Activated naive CD4-positive, alpha-beta T cell treated with anti-CD3 and anti-CD28 coated beads, Interleukin-2, amount 10 ng/mL, durations not matched to agents 7 days and 5 days (primary cell): ENCODE measurements at regions of chr5 and their contacts with region 1.

Region 1: DNA sequence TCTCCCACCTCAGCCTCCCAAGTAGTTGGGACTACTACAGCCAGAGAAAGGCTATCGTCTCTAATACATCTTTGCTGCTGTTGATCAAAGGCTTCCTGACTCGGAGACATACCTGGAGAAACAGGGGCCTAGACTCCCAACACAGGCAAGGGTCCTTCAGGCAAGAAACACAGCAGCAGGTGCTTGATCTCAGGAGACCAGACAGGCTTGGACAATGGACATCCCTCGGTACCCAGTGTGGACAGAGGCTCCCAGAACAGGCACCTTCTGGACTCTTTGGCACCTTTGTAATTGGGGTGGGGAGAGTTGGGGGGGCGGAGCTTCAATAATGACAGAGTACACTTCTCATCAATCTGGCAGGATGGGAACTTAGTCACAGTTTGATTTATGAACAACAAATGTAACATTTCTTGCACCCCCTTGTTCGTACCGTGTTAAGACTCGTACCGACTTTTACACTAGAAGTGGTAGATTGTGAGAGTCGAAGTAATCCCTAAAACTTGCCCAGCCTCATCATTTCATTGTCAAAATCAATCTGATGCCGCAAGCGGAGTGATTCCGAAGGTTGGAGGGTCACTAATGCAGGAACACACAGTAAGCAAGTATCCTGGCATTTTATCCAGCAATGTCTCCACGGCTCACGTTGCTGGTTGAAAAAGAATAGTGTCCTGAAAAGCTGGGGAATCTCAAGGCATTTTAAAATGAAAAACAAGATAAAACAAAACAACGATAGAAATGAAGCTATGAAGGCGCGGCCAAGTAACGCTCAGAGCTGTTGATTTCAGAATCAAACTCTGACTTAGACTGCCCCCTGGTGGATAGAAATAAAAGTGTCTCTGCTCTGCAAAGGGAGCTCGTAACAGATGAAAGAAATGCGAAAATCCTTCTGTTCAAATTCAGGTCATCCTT is 46.4 kb upstream of the STK32A start:
- DNase-seq: peak; percentile 59
- H3K4me3 Mint-ChIP-seq: no peak overlapping the region
- H3K27ac Mint-ChIP-seq: no peak overlapping the region
- H3K4me1 Mint-ChIP-seq: peaks cover 2% of the 10 kb centered on the region
- H3K27me3 Mint-ChIP-seq: no peaks in the 10 kb centered on the region

Region 2: DNA sequence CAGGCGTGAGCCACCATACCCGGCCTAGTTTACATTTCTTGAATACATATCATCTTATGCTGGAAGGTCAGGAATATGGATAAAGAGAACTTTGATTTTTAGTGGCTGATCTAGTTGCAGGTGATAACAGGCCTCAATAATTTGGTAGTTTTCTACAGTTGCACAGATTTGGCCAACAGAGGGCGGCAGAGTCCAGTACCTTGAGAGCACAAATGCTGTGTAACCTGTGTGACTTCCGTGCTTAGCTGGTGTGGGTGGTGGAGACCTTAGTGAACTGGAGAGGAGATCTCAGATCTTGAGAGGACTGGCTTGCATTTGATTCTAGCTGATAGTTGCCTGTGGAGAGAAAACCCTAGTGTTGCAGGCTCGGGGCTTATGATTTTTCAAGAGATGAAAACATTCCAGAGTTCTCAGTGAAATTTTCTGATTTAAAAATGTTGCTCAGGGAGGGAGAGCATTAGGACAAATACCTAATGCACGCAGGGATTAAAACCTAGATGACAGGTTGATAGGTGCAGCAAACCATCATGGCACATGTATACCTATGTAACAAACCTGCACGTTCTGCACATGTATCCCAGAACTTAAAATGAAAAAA is 655.1 kb before region 1 on chr5:
- CTCF ChIA-PET with region 1: interaction called, 38 read pairs
- DNase-seq: peak; percentile 85
- H3K4me3 Mint-ChIP-seq: no peak overlapping the region
- H3K27ac Mint-ChIP-seq: no peak overlapping the region
- H3K4me1 Mint-ChIP-seq: peaks cover 12% of the 10 kb centered on the region
- H3K27me3 Mint-ChIP-seq: peaks cover 9% of the 10 kb centered on the region

Region 3: GRCh38 chr5:146541958-146542849 is 646.2 kb before region 1 on chr5:
- CTCF ChIA-PET with region 1: interaction called, 38 read pairs
- DNase-seq: peak; percentile 75
- H3K4me3 Mint-ChIP-seq: no peak overlapping the region
- H3K27ac Mint-ChIP-seq: no peak overlapping the region
- H3K4me1 Mint-ChIP-seq: no peaks in the 10 kb centered on the region
- H3K27me3 Mint-ChIP-seq: peaks cover 7% of the 10 kb centered on the region

Region 4: DNA sequence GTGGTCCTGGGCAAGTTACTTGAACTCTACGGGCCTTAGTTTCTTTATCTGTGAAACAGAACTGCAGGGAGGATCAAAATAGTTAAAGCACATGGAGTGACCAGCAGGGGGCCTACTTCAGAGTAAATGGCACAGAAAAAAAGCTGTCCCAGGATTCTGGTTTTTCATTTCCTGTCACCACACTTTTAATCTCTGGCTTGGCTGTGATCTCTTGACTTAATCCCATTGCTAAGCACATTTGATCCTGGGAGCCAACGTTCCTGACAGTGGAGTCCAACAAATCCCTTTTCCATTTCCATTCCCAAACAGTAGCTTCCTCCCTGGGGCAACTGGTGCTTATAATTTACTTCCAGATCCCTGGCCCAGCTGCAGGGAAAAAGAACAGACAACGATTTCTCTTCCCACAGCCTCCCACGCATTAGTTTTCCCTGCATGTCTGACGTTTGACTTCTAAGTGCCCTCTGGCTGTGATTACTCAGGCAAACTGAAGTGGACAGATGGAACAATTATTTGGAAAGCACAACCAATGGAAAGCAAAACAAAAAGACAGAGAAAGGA is 90.1 kb before region 1 on chr5:
- CTCF ChIA-PET with region 1: interaction called, 15 read pairs
- DNase-seq: peak; percentile 29
- H3K4me3 Mint-ChIP-seq: no peak overlapping the region
- H3K27ac Mint-ChIP-seq: no peak overlapping the region
- H3K4me1 Mint-ChIP-seq: no peaks in the 10 kb centered on the region
- H3K27me3 Mint-ChIP-seq: no peaks in the 10 kb centered on the region